GM12878 (cell line): ENCODE measurements at regions of chr10 and their contacts with region 1.

Region 1: GRCh38 chr10:58384999-58385783 is at the start of gene TFAM:
- DNase-seq: peak; percentile 66
- ATAC-seq: peak; percentile 90
- H3K4me3 ChIP-seq: peak within 1 kb of the TSS; percentile 85
- H3K27ac ChIP-seq: peak within 1 kb of the TSS; percentile 88
- H3K4me1 ChIP-seq: peaks cover 5% of the 10 kb centered on the region
- H3K27me3 ChIP-seq: no peaks in the 10 kb centered on the region
- CTCF ChIP-seq: peak; percentile 49 to 67 (median 61)
- EP300 ChIP-seq: peak in 1 of 2 experiments; percentile 30; a peak in 1 of 4 replicates
- POLR2A ChIP-seq: peak; percentile 99
- RAD21 ChIP-seq: peak; percentile 70
- polyA plus RNA-seq, gene TFAM: 96.1 to 114 TPM

Region 2: DNA sequence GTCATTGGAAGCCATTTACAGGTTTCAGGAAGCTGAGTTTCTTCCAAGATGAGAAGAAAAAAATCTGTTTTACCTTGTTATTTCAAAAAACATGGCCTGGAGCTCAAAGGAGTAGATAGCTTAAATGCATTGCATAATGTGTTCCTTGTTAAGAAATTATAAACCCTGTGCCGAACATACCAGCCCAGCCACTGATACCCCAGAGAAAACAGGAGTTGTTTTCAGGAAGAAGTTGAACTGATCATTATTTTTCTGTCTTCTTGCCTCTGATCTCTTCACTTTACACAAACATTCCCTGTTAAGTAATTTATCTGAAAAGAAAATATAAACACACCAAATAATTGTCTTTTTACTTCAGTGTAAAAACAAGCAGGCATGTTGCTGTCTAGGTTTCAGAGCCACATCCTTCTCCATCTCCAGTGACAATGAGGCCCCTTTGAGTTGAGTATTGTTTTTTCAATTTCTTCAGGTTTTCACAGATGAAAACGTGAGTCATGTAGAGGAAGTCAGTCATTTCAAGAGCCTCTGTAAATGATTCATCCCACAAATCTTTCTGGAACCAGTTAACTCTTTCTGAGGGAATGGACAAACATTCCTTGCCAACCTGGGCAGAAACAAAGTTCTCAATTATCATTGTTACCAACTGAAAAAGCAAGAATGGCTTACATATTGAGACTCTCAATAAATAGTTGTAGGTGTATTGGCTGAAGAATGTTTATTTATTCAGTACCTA is 361.7 kb before region 1 on chr10:
- CTCF ChIA-PET with region 1: no interaction called
- POLR2A ChIA-PET with region 1: no interaction called
- RAD21 ChIA-PET with region 1: no interaction called
- SMC1A ChIA-PET with region 1: no interaction called
- in situ Hi-C with region 1: no loop called
- intact Hi-C with region 1: no loop called
- DNase-seq: no peak
- ATAC-seq: no peak
- H3K4me3 ChIP-seq: no peak overlapping the region
- H3K27ac ChIP-seq: no peak overlapping the region
- H3K4me1 ChIP-seq: no peaks in the 10 kb centered on the region
- H3K27me3 ChIP-seq: no peaks in the 10 kb centered on the region
- CTCF ChIP-seq: no peak
- EP300 ChIP-seq: no peak
- POLR2A ChIP-seq: no peak
- RAD21 ChIP-seq: no peak

Region 3: GRCh38 chr10:58341947-58342346 is 43.2 kb before region 1 on chr10:
- CTCF ChIA-PET with region 1: interaction called, 10 read pairs
- POLR2A ChIA-PET with region 1: interaction called, 3 read pairs
- RAD21 ChIA-PET with region 1: interaction called, 3 read pairs
- SMC1A ChIA-PET with region 1: interaction called, 11 read pairs
- in situ Hi-C with region 1: no loop called
- intact Hi-C with region 1: no loop called
- DNase-seq: no peak
- ATAC-seq: peak; percentile 58
- H3K4me3 ChIP-seq: no peak overlapping the region
- H3K27ac ChIP-seq: no peak overlapping the region
- H3K4me1 ChIP-seq: peaks cover 13% of the 10 kb centered on the region; the same call in 1 of the 2 replicates
- H3K27me3 ChIP-seq: no peaks in the 10 kb centered on the region
- CTCF ChIP-seq: no peak
- EP300 ChIP-seq: no peak
- POLR2A ChIP-seq: no peak
- RAD21 ChIP-seq: no peak

Region 4: DNA sequence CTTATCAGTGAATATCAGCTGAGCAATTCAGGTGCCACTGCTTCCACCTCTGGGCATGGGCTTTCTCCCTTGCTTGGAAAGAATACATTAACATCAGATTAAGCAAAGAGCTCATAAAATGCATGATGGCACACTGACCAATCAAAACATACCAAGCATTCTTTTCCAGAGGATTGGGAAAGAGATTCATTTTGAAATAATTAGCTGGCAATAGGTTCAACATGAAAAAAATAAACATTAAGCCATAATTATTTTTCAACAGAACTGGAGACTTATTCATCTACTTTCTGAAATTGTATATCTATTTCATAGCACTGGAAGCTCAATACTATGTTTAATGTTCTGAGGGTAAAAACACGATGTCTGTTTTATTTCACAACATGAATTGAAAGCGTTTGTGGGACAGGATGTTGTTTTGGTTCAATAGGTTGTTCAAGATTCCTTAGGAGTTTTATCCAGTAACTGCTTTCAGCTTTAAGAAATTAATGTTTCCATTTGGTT is 53.2 kb after region 1 on chr10:
- CTCF ChIA-PET with region 1: no interaction called
- POLR2A ChIA-PET with region 1: no interaction called
- RAD21 ChIA-PET with region 1: no interaction called
- SMC1A ChIA-PET with region 1: no interaction called
- in situ Hi-C with region 1: no loop called
- intact Hi-C with region 1: no loop called
- DNase-seq: no peak
- ATAC-seq: no peak
- H3K4me3 ChIP-seq: no peak overlapping the region
- H3K27ac ChIP-seq: no peak overlapping the region
- H3K4me1 ChIP-seq: no peaks in the 10 kb centered on the region
- H3K27me3 ChIP-seq: no peaks in the 10 kb centered on the region
- CTCF ChIP-seq: no peak
- EP300 ChIP-seq: no peak
- POLR2A ChIP-seq: no peak
- RAD21 ChIP-seq: no peak